ENCODE measurements at regions of chr19 and their contacts with region 1.

Region 1: DNA sequence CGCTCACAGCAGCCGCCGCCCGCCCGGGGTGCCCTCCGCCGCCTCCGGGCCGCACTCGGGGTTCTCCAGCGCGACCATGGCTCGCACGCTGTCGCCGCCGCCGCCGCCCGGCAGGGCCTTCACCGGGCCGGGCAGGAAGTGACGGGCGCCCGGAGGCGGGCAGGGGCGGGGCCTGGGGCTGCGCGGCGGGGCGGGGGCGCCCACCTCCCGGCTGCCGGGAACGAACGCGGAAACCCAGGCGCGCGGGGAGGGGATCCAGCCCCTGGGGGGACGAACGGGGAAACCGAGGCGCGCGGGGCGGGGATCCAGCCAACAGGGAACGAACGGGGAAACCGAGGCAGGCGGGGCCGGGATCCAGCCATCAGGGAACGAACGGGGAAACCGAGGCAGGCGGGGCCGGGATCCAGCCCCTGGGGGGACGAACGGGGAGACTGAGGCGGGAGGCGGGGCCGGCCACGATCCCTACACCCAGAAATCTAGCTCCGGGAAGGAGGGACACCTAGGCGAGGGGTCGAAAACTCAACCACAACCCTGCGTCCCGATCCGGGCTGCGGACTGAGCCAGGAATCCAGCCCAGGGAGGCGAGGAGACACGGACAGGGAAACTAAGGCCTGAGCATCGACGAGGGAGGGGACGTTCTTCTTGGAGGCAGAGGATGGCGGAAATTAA is at the start of gene R3HDM4:
- DNase-seq: peak; percentile 79 to 89 (median 84)
- H3K4me3 ChIP-seq: peak within 1 kb of the TSS; percentile 85
- H3K27ac ChIP-seq: peak within 1 kb of the TSS in 1 of 2 donors; percentile 65
- H3K4me1 ChIP-seq: peaks cover 8% of the 10 kb centered on the region
- H3K27me3 ChIP-seq: no peaks in the 10 kb centered on the region
- CTCF ChIP-seq: no peak
- EP300 ChIP-seq: no peak
- POLR2A ChIP-seq: peak; percentile 43
- total RNA-seq, gene R3HDM4: 13.1 to 43.0 (median 31.2) TPM

Region 2: DNA sequence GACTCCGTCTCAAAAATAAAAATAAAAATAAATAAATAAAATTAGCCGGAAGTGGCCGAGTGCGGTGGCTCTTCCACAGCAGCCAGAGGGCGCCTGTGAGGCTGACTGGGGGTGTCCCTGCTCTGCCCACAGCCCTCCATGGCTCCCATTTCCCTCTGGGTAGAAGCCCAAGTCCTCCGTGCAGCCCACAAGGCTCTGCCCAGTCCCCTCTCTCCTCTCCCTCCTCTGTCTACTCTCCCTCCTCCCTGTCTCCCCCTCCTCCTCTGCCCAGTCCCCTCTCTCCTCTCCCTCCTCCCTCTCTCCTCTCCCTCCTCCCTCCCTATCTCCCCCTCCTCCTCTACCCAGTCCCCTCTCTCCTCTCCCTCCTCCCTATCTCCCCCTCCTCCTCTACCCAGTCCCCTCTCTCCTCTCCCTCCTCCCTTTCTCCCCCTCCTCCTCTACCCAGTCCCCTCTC is 141.9 kb before region 1 on chr19:
- intact Hi-C with region 1: loop called in 2 of 4 experiments (anchors 5 to 10 kb)
- DNase-seq: no peak
- H3K4me3 ChIP-seq: no peak overlapping the region
- H3K27ac ChIP-seq: no peak overlapping the region
- H3K4me1 ChIP-seq: no peaks in the 10 kb centered on the region
- H3K27me3 ChIP-seq: no peaks in the 10 kb centered on the region
- CTCF ChIP-seq: no peak
- EP300 ChIP-seq: no peak
- POLR2A ChIP-seq: no peak

Region 3: GRCh38 chr19:796692-797527 is 116.3 kb before region 1 on chr19 and contains the start of gene PTBP1:
- intact Hi-C with region 1: loop called in 2 of 4 experiments (anchors 10 kb)
- DNase-seq: peak; percentile 99 to 100 (median 100)
- H3K4me3 ChIP-seq: peak within 1 kb of the TSS; percentile 68
- H3K27ac ChIP-seq: peak within 1 kb of the TSS; percentile 99 to 100
- H3K4me1 ChIP-seq: peaks cover 34% of the 10 kb centered on the region
- H3K27me3 ChIP-seq: no peaks in the 10 kb centered on the region
- CTCF ChIP-seq: no peak
- EP300 ChIP-seq: no peak
- POLR2A ChIP-seq: peak; percentile 79
- total RNA-seq, gene PTBP1: 73.4 to 312 (median 233) TPM

Region 4: GRCh38 chr19:860481-861101 is 52.6 kb before region 1 on chr19:
- intact Hi-C with region 1: loop called in 3 of 4 experiments (anchors 2 to 5 kb)
- DNase-seq: peak in 3 of 5 donors; percentile 71 to 73 (median 71)
- H3K4me3 ChIP-seq: peak overlapping the region; percentile 25
- H3K27ac ChIP-seq: no peak overlapping the region
- H3K4me1 ChIP-seq: peaks cover 9% of the 10 kb centered on the region
- H3K27me3 ChIP-seq: peaks cover 4% of the 10 kb centered on the region
- CTCF ChIP-seq: no peak
- EP300 ChIP-seq: no peak
- POLR2A ChIP-seq: no peak

Region 5: DNA sequence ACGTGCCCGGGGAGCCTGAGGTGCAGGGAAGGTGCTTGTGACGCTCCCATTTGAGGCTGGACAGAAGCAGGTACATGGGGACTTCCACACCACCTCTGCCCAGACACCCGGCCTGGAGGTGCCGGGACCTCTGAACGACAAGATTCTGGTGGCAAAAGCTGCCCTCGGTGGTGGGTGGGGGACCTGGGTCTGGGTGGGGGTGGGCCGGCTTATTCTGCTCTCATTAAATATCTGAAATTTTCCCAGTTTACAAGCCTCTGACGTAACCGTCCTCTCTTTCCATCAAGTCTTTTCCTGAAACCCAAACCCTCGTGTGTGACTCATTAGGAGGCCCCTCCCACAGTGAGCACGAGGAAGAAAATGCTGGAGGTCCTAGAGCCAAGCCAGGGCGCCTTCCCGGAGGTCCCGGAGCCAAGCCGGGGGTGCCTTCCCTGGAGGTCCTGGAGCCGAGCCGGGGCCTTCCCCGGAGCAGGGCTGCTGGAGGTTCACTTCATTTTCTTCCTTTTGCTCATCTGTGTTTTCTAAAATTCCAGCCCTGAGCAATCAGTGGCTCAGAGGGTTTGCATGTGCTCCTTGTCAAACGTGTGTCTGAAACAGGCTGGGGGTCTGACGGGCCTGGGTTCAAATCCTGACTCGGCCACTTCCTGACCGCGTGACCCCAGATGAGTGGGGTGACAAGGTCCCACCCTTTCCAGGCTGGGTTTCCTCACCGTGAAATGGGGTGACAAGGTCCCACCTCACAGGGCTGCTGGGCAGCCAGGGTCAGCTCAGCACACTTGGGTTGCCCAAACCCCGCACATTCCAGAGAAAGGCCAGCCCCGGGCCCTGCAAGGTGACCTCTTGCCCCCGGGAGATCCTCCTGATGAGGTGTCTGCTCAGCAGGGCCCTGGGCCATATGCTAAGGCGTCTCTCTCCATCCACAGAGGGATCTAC is 43.7 kb before region 1 on chr19:
- intact Hi-C with region 1: loop called in 2 of 4 experiments (anchors 5 kb)
- DNase-seq: peak; percentile 86 to 92 (median 87)
- H3K4me3 ChIP-seq: no peak overlapping the region
- H3K27ac ChIP-seq: peak overlapping the region; percentile 90 to 92
- H3K4me1 ChIP-seq: peaks cover 17% of the 10 kb centered on the region
- H3K27me3 ChIP-seq: no peaks in the 10 kb centered on the region
- CTCF ChIP-seq: no peak
- EP300 ChIP-seq: no peak
- POLR2A ChIP-seq: no peak

Measured in ovary (tissue), 10 donors.